Activated CD4-positive, alpha-beta memory T cell treated with anti-CD3 and anti-CD28 coated beads, Interleukin-2, amount 10 ng/mL, durations not matched to agents 7 days and 5 days (primary cell): ENCODE measurements at regions of chr16 and their contacts with region 1.

Region 1: GRCh38 chr16:28863929-28864793 is 518 bp downstream of the SH2B1 start:
- DNase-seq: peak; percentile 26
- H3K4me3 Mint-ChIP-seq: peak overlapping the region; percentile 87
- H3K27ac Mint-ChIP-seq: peak overlapping the region; percentile 90
- H3K4me1 Mint-ChIP-seq: peaks cover 35% of the 10 kb centered on the region
- H3K27me3 Mint-ChIP-seq: no peaks in the 10 kb centered on the region

Region 2: DNA sequence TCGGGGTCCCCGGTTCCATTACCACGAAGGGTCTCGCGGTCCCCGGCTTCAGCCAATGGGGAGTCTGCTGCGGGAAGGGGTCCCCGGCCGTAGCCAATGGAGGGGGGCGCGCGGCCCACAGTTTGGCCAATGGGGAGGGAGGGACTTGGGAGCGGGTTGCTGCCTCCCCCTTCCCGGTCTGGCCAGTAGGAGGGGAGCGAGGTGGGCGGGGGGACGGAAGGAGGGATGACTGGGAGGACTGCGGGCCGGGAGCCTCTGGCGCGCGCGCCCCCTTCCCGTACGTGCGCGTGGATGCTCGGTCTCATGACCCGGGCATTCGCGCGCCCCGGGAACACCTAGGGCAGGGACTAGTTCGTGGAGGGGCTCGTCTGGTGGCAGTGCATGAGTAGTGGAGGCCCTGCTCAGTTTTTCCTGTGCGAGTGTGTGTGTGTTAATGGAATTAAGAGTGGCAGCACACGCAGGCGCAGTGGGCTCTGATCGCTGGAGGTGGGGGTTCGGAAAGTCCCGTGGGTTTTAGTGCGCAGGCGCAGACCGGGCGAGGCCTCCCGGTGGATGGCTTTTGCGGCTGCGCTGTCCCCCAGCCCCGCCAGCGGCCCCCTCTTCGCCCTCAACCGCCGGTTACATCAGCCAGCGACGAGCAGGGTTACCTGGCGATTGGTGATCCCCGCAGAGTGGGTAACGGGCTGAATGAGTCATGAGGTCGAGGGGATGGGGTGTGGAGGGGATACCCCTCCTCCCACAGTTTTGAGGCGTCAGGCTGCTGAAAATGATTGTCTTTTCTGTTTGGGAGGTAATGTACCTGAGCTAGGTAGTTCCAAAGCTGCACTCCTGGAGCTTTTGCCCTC is 40.1 kb before region 1 on chr16:
- CTCF ChIA-PET with region 1: interaction called, 3 read pairs
- POLR2A ChIA-PET with region 1: interaction called, 64 read pairs
- DNase-seq: peak; percentile 96
- H3K4me3 Mint-ChIP-seq: peak overlapping the region; percentile 99
- H3K27ac Mint-ChIP-seq: peak overlapping the region; percentile 99
- H3K4me1 Mint-ChIP-seq: peaks cover 56% of the 10 kb centered on the region
- H3K27me3 Mint-ChIP-seq: no peaks in the 10 kb centered on the region

Region 3: DNA sequence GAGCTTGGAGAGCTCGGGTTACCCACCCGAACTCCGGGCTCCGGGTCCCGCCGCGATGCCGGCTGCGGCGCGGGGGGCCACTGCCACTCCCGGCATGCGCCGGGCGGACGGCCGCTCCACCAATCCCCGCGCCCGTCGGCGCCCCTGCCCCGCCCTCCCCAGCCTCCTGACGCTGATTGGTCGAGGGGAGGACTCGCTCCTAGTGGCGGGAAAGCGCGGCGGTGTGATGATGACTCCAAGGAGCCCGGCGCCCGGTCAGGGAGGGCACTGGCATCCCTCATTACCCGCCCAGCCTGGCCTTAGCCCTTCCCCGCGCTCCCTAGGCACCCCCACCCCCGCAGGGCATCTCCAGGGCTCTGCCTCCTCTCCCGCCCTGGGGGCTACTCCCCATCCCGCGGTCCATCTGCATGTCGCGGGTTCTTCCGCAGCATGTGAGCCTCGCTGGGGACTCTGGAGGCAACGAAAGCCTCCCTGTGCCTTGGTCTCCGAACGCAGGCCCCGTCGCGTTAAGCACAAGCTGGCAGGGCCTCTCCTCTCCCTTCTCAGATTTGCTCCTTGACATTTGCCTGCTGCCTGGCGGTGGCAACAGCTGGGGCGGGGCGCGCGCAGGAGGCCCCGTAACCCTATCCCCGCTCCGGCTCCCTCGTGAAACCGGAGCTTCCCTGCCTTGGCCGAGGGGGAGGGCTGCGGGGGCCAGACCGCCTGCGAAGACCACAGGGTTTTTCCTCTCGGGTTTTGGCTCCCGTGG is 15.9 kb after region 1 on chr16:
- CTCF ChIA-PET with region 1: interaction called, 5 read pairs
- POLR2A ChIA-PET with region 1: interaction called, 37 read pairs
- DNase-seq: peak; percentile 93
- H3K4me3 Mint-ChIP-seq: peak overlapping the region; percentile 88
- H3K27ac Mint-ChIP-seq: peak overlapping the region; percentile 26
- H3K4me1 Mint-ChIP-seq: peaks cover 35% of the 10 kb centered on the region
- H3K27me3 Mint-ChIP-seq: peaks cover 6% of the 10 kb centered on the region

Region 4: DNA sequence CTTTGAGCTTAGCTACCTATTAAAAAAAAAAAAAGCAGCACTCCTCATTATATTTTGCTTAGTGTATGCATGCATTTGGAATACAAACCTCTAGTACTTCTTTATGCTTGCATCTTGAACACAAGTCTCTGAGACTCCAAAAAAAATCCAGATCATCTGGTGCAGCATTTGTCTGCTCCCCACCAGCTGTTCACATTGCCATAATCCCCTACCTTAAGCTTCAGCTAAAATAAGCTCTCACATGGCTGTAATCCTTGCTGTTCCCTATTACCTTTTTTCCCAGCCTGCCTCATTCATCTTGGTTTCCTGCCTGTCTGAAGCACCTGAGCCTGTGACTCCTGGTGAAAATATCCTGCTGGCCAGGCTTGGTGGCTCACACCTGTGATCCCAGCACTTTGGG is 79.1 kb after region 1 on chr16:
- CTCF ChIA-PET with region 1: interaction called, 26 read pairs
- POLR2A ChIA-PET with region 1: interaction called, 11 read pairs
- DNase-seq: no peak
- H3K4me3 Mint-ChIP-seq: no peak overlapping the region
- H3K27ac Mint-ChIP-seq: no peak overlapping the region
- H3K4me1 Mint-ChIP-seq: peaks cover 23% of the 10 kb centered on the region
- H3K27me3 Mint-ChIP-seq: peaks cover 2% of the 10 kb centered on the region

Region 5: DNA sequence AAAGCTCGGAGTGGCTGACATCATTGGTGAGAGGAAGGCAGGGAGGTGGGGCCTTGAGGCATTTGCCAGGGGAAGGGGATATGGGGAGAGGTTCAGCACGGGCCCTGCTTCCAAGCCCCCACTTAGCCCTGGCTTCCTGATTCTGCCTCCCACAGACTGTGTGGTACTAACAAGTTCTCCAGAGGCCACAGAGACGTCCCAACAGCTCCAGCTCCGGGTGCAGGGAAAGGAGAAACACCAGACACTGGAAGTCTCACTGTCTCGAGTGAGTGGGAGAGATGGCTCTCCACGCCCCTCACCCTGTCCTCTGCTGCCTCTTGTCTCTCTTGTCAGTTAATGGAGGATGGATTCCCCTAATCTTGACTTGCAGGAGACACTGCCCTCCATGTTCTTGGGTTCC is 94.7 kb after region 1 on chr16:
- CTCF ChIA-PET with region 1: no interaction called
- POLR2A ChIA-PET with region 1: no interaction called
- DNase-seq: no peak
- H3K4me3 Mint-ChIP-seq: no peak overlapping the region
- H3K27ac Mint-ChIP-seq: no peak overlapping the region
- H3K4me1 Mint-ChIP-seq: peaks cover 6% of the 10 kb centered on the region
- H3K27me3 Mint-ChIP-seq: no peaks in the 10 kb centered on the region

Region 6: DNA sequence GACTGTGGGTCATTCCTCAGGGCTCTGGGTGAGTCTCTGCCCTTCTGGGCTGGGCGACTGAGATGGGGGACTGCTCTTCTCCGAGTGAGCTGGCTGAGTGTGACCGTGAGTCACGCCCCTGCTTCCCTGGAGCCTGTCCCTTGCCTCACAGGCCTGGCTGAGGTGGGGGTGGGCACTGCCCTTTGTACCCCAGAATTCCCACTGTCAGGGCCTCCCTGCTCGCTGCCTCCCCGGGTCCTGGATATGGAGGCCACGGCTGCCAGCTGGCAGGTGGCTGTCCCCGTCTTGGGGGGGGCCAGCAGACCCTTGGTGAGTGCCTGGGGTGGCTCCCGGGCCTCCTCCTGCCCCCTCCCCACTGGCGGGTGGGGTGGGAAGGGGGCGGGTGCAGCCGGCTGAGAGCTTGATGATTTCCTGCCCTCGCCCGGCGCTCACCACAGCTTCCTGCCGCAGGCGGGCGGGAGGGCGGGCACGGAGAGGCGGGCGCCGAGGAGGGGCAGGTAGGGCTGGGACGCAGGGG is 120.5 kb after region 1 on chr16 and contains the start of gene LAT:
- CTCF ChIA-PET with region 1: no interaction called
- POLR2A ChIA-PET with region 1: interaction called, 13 read pairs
- DNase-seq: peak; percentile 89
- H3K4me3 Mint-ChIP-seq: peak within 1 kb of the TSS; percentile 99
- H3K27ac Mint-ChIP-seq: peak within 1 kb of the TSS; percentile 92
- H3K4me1 Mint-ChIP-seq: peaks cover 44% of the 10 kb centered on the region
- H3K27me3 Mint-ChIP-seq: no peaks in the 10 kb centered on the region
- total RNA-seq, gene LAT: 333 to 341 TPM

Region 7: DNA sequence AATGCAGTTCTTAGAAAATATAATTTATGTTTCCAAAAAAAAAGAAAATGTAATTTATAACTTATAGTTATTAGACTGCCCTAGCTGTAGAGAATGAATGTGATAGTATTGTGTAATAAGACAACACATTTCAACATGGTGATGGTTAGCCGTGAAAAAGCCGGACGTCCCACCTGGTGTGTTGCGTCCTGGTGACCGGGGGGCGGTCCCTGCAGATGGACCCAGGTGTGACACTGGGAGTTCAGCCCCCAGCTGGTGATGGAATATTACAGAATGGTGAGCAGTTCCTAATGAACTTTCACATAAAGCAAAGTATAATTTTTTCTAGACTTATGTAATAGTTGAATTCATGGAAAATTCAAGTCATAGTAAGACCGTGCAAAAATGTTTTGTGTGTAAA is 253.5 kb after region 1 on chr16:
- CTCF ChIA-PET with region 1: no interaction called
- POLR2A ChIA-PET with region 1: no interaction called
- DNase-seq: peak; percentile 9
- H3K4me3 Mint-ChIP-seq: no peak overlapping the region
- H3K27ac Mint-ChIP-seq: no peak overlapping the region
- H3K4me1 Mint-ChIP-seq: peaks cover 45% of the 10 kb centered on the region
- H3K27me3 Mint-ChIP-seq: no peaks in the 10 kb centered on the region

Region 8: GRCh38 chr16:29182501-29182900 is 318.3 kb after region 1 on chr16:
- CTCF ChIA-PET with region 1: no interaction called
- POLR2A ChIA-PET with region 1: no interaction called
- DNase-seq: no peak
- H3K4me3 Mint-ChIP-seq: no peak overlapping the region
- H3K27ac Mint-ChIP-seq: no peak overlapping the region
- H3K4me1 Mint-ChIP-seq: no peaks in the 10 kb centered on the region
- H3K27me3 Mint-ChIP-seq: no peaks in the 10 kb centered on the region